B cell (primary cell): ENCODE measurements at regions of chr12 and their contacts with region 1.

Region 1: DNA sequence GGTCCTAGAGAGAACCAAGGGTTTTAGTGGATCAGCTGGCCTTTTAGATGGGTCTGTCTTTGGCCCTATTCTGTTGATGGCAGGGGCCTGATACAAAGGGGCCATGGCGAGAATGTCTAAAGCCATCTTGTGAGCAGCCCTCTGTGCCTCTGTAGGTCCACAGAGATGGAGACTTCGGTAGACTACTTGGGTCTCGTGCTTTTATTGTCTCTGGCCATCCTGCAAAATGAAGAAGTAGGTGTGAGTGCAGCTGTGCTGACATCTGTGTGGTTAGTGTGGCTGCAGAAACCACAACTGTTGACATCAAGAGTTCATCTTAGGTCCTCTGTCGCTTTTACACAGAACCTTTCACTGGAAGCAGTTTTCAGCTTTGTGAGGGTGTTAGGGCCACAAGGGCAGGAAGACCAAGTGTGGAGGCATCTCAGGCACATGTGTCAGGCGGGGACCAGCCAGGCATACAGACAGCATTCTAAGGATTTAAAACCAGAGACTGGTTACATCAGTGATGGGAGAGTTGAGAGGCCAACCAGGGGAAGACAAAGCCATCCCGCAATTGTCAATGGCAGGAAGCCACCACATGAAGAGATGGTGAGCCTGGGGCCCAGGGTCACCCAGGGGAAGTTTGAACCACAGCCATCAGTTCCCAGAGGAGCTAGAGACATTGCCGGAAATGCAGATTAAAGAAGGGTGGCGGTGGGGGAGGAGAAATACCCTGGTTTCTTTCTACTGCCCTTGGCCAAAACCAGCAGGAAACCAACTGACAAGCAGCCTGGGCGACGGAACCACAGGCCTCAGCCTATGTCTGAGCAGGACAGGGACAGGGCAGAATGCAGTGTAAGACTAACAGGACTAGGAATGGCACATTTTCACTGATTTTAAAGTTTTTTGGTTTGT is 13.0 kb upstream of the TPCN1 start:
- DNase-seq: peak; percentile 95
- ATAC-seq: peak; percentile 75
- H3K4me3 ChIP-seq: peak overlapping the region in 3 of 5 experiments; percentile 4 to 47 (median 5)
- H3K4me3 Mint-ChIP-seq: peak overlapping the region; percentile 86
- H3K27ac ChIP-seq: peak overlapping the region; percentile 91 to 94
- H3K27ac Mint-ChIP-seq: peak overlapping the region; percentile 99
- H3K4me1 ChIP-seq: peaks cover 46 to 59% of the 10 kb centered on the region in 2 donors
- H3K4me1 Mint-ChIP-seq: peaks cover 62% of the 10 kb centered on the region
- H3K27me3 ChIP-seq: no peaks in the 10 kb centered on the region
- H3K27me3 Mint-ChIP-seq: no peaks in the 10 kb centered on the region
- CTCF ChIP-seq: no peak

Region 2: GRCh38 chr12:111434680-111435338 is 1773.5 kb before region 1 on chr12:
- CTCF ChIA-PET with region 1: no interaction called
- POLR2A ChIA-PET with region 1: no interaction called
- intact Hi-C with region 1: loop called (anchors 10 kb)
- DNase-seq: peak; percentile 92
- ATAC-seq: peak; percentile 76
- H3K4me3 ChIP-seq: peak overlapping the region; percentile 5 to 65 (median 43)
- H3K4me3 Mint-ChIP-seq: peak overlapping the region; percentile 92
- H3K27ac ChIP-seq: peak overlapping the region; percentile 96 to 97
- H3K27ac Mint-ChIP-seq: peak overlapping the region; percentile 99
- H3K4me1 ChIP-seq: peaks cover 88 to 98% of the 10 kb centered on the region in 2 donors
- H3K4me1 Mint-ChIP-seq: peaks cover 90% of the 10 kb centered on the region
- H3K27me3 ChIP-seq: no peaks in the 10 kb centered on the region
- H3K27me3 Mint-ChIP-seq: no peaks in the 10 kb centered on the region
- CTCF ChIP-seq: no peak

Region 3: GRCh38 chr12:113196996-113197395 is 11.3 kb before region 1 on chr12:
- CTCF ChIA-PET with region 1: interaction called, 17 read pairs
- POLR2A ChIA-PET with region 1: interaction called, 13 read pairs
- intact Hi-C with region 1: loop called (anchors 1 kb)
- DNase-seq: peak; percentile 84
- ATAC-seq: peak; percentile 94
- H3K4me3 ChIP-seq: no peak overlapping the region
- H3K4me3 Mint-ChIP-seq: peak overlapping the region; percentile 0
- H3K27ac ChIP-seq: no peak overlapping the region
- H3K27ac Mint-ChIP-seq: peak overlapping the region; percentile 73
- H3K4me1 ChIP-seq: peaks cover 12 to 18% of the 10 kb centered on the region in 2 donors
- H3K4me1 Mint-ChIP-seq: peaks cover 20% of the 10 kb centered on the region
- H3K27me3 ChIP-seq: no peaks in the 10 kb centered on the region
- H3K27me3 Mint-ChIP-seq: no peaks in the 10 kb centered on the region
- CTCF ChIP-seq: peak; percentile 73

Region 4: GRCh38 chr12:113221181-113221997 is 13.1 kb after region 1 on chr12 and contains the start of gene TPCN1:
- CTCF ChIA-PET with region 1: interaction called, 35 read pairs
- POLR2A ChIA-PET with region 1: interaction called, 69 read pairs
- intact Hi-C with region 1: loop called (anchors 1 kb)
- DNase-seq: peak; percentile 100
- ATAC-seq: peak; percentile 89
- H3K4me3 ChIP-seq: peak within 1 kb of the TSS; percentile 69 to 92 (median 86)
- H3K4me3 Mint-ChIP-seq: peak within 1 kb of the TSS; percentile 90
- H3K27ac ChIP-seq: peak within 1 kb of the TSS; percentile 72 to 93
- H3K27ac Mint-ChIP-seq: peak within 1 kb of the TSS; percentile 89
- H3K4me1 ChIP-seq: peaks cover 32 to 55% of the 10 kb centered on the region in 2 donors
- H3K4me1 Mint-ChIP-seq: peaks cover 41% of the 10 kb centered on the region
- H3K27me3 ChIP-seq: no peaks in the 10 kb centered on the region
- H3K27me3 Mint-ChIP-seq: no peaks in the 10 kb centered on the region
- CTCF ChIP-seq: peak; percentile 21
- total RNA-seq, gene TPCN1: 258 and 267 TPM in 2 replicates

Region 5: DNA sequence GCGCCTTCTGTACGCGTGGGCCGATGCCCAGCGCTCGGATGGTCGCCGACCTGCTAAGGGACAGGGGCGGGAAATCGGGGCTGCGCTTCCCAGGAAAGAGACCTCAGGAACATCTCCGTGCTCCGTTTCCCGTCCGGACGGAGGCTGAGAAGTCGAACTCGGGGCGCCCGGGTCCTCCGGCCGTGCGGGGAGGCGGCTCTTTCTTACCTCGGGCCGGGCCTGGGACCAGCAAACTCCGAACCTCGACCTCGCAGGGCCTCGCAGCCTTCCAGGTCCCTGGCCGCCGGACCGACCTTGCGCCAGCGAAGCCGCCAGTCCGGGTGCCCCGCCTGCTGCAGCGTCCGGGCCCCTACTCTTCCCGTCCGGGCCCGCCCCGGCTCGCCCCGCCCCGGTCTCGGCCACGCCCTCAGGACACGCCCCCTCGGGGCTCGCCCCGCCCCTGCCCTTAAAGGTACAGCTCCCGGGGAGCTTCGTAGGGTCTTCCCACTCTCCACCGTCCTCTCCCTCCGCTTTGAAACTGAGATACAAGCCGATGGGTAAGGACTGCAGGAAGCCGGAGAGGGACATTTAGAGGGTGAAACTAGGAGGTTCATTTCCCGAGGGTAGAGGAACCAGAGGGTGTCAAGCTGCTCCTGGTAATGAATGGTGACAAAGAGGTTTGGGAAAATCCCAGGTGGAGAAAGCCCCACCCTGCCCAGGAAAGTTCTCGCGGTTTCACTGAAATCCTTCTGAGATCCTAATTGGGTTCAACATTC is 126.7 kb after region 1 on chr12 and contains the start of gene SLC8B1:
- CTCF ChIA-PET with region 1: no interaction called
- POLR2A ChIA-PET with region 1: no interaction called
- intact Hi-C with region 1: loop called (anchors 1 kb)
- DNase-seq: peak; percentile 88
- ATAC-seq: peak; percentile 100
- H3K4me3 ChIP-seq: peak within 1 kb of the TSS; percentile 74 to 96 (median 85)
- H3K4me3 Mint-ChIP-seq: peak within 1 kb of the TSS; percentile 98
- H3K27ac ChIP-seq: peak within 1 kb of the TSS in 1 of 2 donors; percentile 21
- H3K27ac Mint-ChIP-seq: peak within 1 kb of the TSS; percentile 78
- H3K4me1 ChIP-seq: peaks cover 29 to 36% of the 10 kb centered on the region in 2 donors
- H3K4me1 Mint-ChIP-seq: peaks cover 35% of the 10 kb centered on the region
- H3K27me3 ChIP-seq: no peaks in the 10 kb centered on the region
- H3K27me3 Mint-ChIP-seq: no peaks in the 10 kb centered on the region
- CTCF ChIP-seq: no peak
- total RNA-seq, gene SLC8B1: 34.1 and 35.6 TPM in 2 replicates

Region 6: DNA sequence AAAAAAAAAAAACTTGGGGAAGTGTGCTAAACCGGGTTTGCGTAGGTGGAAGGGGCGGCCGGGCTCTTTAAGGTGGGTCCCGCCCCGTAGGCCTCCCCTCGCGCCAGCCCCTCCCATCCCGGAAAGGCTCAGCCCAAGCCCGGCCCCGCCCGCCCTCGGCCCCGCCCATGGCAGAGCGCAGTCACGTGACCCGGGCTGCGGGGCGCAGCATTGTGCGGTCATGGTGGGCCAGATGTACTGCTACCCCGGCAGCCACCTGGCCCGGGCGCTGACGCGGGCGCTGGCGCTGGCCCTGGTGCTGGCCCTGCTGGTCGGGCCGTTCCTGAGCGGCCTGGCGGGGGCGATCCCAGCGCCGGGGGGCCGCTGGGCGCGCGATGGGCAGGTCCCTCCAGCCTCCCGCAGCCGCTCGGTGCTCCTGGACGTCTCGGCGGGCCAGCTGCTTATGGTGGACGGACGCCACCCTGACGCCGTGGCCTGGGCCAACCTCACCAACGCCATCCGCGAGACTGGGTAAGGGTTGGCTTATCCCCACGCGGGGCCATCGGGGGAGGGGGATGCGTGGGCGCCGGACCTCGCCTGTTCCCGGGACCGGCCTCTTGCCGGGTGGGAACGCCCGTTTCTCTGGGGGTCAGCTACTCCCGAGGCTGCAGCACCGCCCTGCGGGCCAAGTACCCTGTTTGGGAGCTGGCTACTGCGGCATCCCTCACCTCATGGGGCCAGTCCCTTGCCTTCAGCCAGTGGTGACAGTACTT is 150.3 kb after region 1 on chr12 and contains the start of gene PLBD2:
- CTCF ChIA-PET with region 1: no interaction called
- POLR2A ChIA-PET with region 1: interaction called, 9 read pairs
- intact Hi-C with region 1: loop called (anchors 5 kb)
- DNase-seq: peak; percentile 97
- ATAC-seq: peak; percentile 97
- H3K4me3 ChIP-seq: peak within 1 kb of the TSS; percentile 51 to 90 (median 68)
- H3K4me3 Mint-ChIP-seq: peak within 1 kb of the TSS; percentile 91
- H3K27ac ChIP-seq: peak within 1 kb of the TSS; percentile 36 to 79
- H3K27ac Mint-ChIP-seq: peak within 1 kb of the TSS; percentile 91
- H3K4me1 ChIP-seq: peaks cover 11 to 18% of the 10 kb centered on the region in 2 donors
- H3K4me1 Mint-ChIP-seq: peaks cover 12% of the 10 kb centered on the region
- H3K27me3 ChIP-seq: peaks cover 0 to 2% (median 0%) of the 10 kb centered on the region in 4 experiments
- H3K27me3 Mint-ChIP-seq: no peaks in the 10 kb centered on the region
- CTCF ChIP-seq: no peak
- total RNA-seq, gene PLBD2: 11.6 and 14.0 TPM in 2 replicates